ENCODE measurements at regions of chr11 and their contacts with region 1.

Region 1: DNA sequence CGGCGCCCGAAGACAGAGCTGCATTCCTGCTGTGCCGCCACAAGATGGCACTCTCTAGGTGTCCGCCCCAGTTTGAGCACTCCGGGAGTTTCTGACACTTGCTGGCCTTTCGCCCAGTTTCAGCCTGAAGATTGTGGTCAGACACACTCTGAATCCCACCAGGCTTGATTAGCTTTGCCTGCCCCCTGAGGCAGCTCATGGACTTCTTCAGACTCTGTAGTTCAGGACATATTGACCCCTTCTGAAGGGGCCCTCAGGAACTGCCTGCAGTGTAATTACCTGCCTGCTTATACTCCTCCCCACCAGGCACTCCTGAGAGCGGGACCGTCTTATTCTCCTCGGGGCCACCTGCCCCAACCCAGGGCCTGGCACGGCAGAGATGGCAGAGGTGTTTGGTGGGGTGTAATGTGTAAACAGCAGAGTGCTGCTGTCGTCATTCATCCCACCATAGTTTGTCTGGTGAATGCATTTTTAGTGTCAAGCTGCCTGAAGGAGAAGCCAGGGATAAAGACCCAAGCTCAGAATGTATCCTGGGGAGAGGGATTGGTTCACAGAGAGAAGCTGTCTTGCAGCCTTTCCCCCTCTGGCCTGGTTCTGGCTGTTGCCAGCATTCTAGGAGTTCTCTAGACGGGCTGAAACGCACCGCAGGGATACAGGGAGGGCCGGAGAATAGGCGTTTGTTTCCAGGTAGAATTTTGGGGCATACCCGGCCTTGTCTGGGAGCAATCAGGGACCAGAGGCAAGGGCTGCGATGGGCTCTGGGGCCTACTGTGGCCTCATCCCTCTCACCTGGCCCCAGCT is 46.4 kb downstream of the EIF3F start:
- DNase-seq: peak in 4 of 5 donors; percentile 42 to 48 (median 46)
- H3K4me3 ChIP-seq: no peak overlapping the region
- H3K4me3 Mint-ChIP-seq: peak overlapping the region; percentile 6 to 81 (median 54)
- H3K27ac ChIP-seq: no peak overlapping the region
- H3K27ac Mint-ChIP-seq: peak overlapping the region in 5 of 7 donors; percentile 7 to 82 (median 72)
- H3K4me1 ChIP-seq: peaks cover 9% of the 10 kb centered on the region
- H3K4me1 Mint-ChIP-seq: peaks cover 8 to 12% (median 9%) of the 10 kb centered on the region in 4 donors
- H3K27me3 ChIP-seq: no peaks in the 10 kb centered on the region
- H3K27me3 Mint-ChIP-seq: peaks cover 6 to 23% of the 10 kb centered on the region in 2 donors

Region 2: DNA sequence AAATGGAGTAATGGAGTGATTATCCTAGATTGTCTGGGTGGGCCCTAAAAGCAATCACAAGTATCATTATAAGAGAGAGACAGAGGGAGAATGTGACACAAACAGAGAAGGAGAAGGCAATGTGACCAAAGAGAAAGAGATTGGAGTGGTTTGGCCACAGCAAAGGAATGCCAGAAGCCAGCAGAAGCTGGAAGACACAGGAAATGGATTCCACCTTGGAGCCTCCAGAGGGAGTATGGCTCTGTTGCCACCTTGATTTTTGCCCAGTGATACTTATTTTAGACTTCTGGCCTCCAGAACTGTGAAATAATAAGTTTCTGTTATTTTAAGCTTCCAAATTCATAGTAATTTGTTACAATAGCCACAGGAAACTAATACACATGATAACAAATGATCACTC is 200.0 kb before region 1 on chr11:
- CTCF ChIA-PET with region 1: no interaction called
- POLR2A ChIA-PET with region 1: no interaction called
- intact Hi-C with region 1: no loop called
- DNase-seq: no peak
- H3K4me3 ChIP-seq: no peak overlapping the region
- H3K4me3 Mint-ChIP-seq: no peak overlapping the region
- H3K27ac ChIP-seq: no peak overlapping the region
- H3K27ac Mint-ChIP-seq: no peak overlapping the region
- H3K4me1 ChIP-seq: no peaks in the 10 kb centered on the region
- H3K4me1 Mint-ChIP-seq: peaks cover 0 to 2% (median 0%) of the 10 kb centered on the region in 4 donors
- H3K27me3 ChIP-seq: no peaks in the 10 kb centered on the region
- H3K27me3 Mint-ChIP-seq: peaks cover 1 to 5% of the 10 kb centered on the region in 2 donors

Region 3: GRCh38 chr11:7910286-7910788 is 123.2 kb before region 1 on chr11:
- CTCF ChIA-PET with region 1: no interaction called
- POLR2A ChIA-PET with region 1: no interaction called
- intact Hi-C with region 1: no loop called
- DNase-seq: no peak
- H3K4me3 ChIP-seq: no peak overlapping the region
- H3K4me3 Mint-ChIP-seq: no peak overlapping the region
- H3K27ac ChIP-seq: no peak overlapping the region
- H3K27ac Mint-ChIP-seq: no peak overlapping the region
- H3K4me1 ChIP-seq: no peaks in the 10 kb centered on the region
- H3K4me1 Mint-ChIP-seq: no peaks in the 10 kb centered on the region
- H3K27me3 ChIP-seq: no peaks in the 10 kb centered on the region
- H3K27me3 Mint-ChIP-seq: peaks cover 11 to 35% of the 10 kb centered on the region in 2 donors

Region 4: GRCh38 chr11:8018484-8019313 is 14.8 kb before region 1 on chr11:
- CTCF ChIA-PET with region 1: interaction called, 16 read pairs
- POLR2A ChIA-PET with region 1: no interaction called
- intact Hi-C with region 1: no loop called
- DNase-seq: peak; percentile 86 to 91 (median 89)
- H3K4me3 ChIP-seq: peak overlapping the region; percentile 23 to 74
- H3K4me3 Mint-ChIP-seq: peak overlapping the region; percentile 79 to 87 (median 84)
- H3K27ac ChIP-seq: peak overlapping the region; percentile 61
- H3K27ac Mint-ChIP-seq: peak overlapping the region; percentile 87 to 98 (median 93)
- H3K4me1 ChIP-seq: peaks cover 14% of the 10 kb centered on the region
- H3K4me1 Mint-ChIP-seq: peaks cover 10 to 20% (median 14%) of the 10 kb centered on the region in 4 donors
- H3K27me3 ChIP-seq: no peaks in the 10 kb centered on the region
- H3K27me3 Mint-ChIP-seq: peaks cover 15 to 20% of the 10 kb centered on the region in 2 donors

Region 5: GRCh38 chr11:8045839-8046238 is 12.3 kb after region 1 on chr11:
- CTCF ChIA-PET with region 1: interaction called, 16 read pairs
- POLR2A ChIA-PET with region 1: no interaction called
- intact Hi-C with region 1: no loop called
- DNase-seq: no peak
- H3K4me3 ChIP-seq: no peak overlapping the region
- H3K4me3 Mint-ChIP-seq: no peak overlapping the region
- H3K27ac ChIP-seq: no peak overlapping the region
- H3K27ac Mint-ChIP-seq: no peak overlapping the region
- H3K4me1 ChIP-seq: no peaks in the 10 kb centered on the region
- H3K4me1 Mint-ChIP-seq: no peaks in the 10 kb centered on the region
- H3K27me3 ChIP-seq: no peaks in the 10 kb centered on the region
- H3K27me3 Mint-ChIP-seq: peaks cover 2 to 5% of the 10 kb centered on the region in 2 donors

Region 6: DNA sequence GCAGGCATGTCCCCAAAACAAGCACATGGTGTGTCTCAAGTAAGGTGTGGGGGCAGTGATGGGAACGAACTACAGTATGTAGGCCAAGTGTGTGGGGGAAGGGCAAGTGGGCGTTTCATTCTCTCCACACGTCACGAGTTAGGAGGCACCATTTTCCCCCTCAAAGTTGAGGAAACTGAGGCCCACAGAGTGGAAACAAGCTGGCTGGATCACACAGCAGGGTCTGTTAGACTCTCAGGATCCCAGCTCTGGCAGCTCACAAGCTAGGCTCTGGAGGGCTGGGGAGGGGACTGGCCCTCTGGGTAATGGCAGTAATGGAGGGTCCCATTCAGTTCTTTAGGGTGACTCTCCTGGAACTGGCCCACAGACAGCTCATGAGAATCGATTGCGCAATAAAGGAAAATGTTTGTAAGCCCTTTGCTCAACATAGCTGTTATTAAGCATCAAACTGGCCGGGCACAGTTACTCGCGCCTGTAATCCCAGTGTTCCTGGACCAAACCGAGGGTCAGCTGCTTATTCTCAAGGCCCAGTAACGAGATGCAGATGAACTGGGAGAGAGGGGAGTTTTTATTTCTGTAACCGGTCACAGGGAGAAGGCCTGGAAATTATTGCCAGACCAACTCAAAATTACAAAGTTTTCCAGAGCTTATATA is 23.4 kb after region 1 on chr11:
- CTCF ChIA-PET with region 1: interaction called, 10 read pairs
- POLR2A ChIA-PET with region 1: no interaction called
- intact Hi-C with region 1: no loop called
- DNase-seq: no peak
- H3K4me3 ChIP-seq: no peak overlapping the region
- H3K4me3 Mint-ChIP-seq: no peak overlapping the region
- H3K27ac ChIP-seq: no peak overlapping the region
- H3K27ac Mint-ChIP-seq: no peak overlapping the region
- H3K4me1 ChIP-seq: no peaks in the 10 kb centered on the region
- H3K4me1 Mint-ChIP-seq: peaks cover 0 to 2% (median 0%) of the 10 kb centered on the region in 4 donors
- H3K27me3 ChIP-seq: no peaks in the 10 kb centered on the region
- H3K27me3 Mint-ChIP-seq: no peaks in the 10 kb centered on the region

Region 7: GRCh38 chr11:8087185-8087584 is 53.7 kb after region 1 on chr11:
- CTCF ChIA-PET with region 1: interaction called, 17 read pairs
- POLR2A ChIA-PET with region 1: no interaction called
- intact Hi-C with region 1: no loop called
- DNase-seq: no peak
- H3K4me3 ChIP-seq: no peak overlapping the region
- H3K4me3 Mint-ChIP-seq: no peak overlapping the region
- H3K27ac ChIP-seq: no peak overlapping the region
- H3K27ac Mint-ChIP-seq: no peak overlapping the region
- H3K4me1 ChIP-seq: no peaks in the 10 kb centered on the region
- H3K4me1 Mint-ChIP-seq: peaks cover 0 to 3% (median under 1%) of the 10 kb centered on the region in 4 donors
- H3K27me3 ChIP-seq: peaks cover 11% of the 10 kb centered on the region
- H3K27me3 Mint-ChIP-seq: peaks cover 22 to 30% of the 10 kb centered on the region in 2 donors

Region 8: DNA sequence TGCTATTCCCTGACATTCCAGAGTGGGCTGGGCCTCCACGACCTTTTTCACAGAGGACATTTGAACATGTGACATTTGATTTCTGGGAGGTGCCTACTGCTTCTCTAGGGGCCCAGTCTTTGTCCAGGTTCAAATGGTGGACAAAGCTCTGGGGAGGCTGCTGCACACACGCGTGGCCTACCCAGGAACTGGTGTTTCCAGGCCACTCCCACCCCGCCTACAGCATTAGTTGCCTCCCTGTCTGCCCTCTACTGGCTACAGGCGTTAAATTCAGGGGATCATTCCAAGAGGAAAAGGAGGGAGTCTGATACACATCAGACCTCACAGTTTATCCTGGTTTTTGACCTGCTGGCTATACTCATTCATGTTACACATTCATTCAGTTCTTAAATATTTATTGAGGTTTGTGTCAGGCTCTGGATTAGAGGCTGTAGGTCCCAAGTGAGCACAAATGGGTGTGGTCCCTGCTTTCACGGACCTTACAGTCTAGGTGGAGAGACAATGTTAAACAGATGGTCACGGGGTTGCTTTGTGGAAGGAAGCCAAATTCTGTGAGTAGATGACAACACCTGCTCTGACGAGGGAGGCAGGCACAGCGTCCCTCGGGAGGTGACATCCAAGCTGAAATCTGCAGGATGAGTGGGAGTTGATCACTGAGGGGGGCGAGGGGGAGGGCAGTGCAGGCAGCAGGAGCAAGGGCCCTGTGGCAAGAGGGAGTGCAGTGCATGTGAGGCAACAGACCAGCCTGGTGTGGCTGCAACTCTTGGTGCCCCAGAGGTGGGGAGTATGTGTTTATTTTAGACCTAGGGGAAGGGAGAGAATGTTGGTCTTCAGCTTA is 59.3 kb after region 1 on chr11:
- CTCF ChIA-PET with region 1: interaction called, 127 read pairs
- POLR2A ChIA-PET with region 1: no interaction called
- intact Hi-C with region 1: no loop called
- DNase-seq: peak in 3 of 5 donors; percentile 16 to 19 (median 16)
- H3K4me3 ChIP-seq: no peak overlapping the region
- H3K4me3 Mint-ChIP-seq: no peak overlapping the region
- H3K27ac ChIP-seq: no peak overlapping the region
- H3K27ac Mint-ChIP-seq: no peak overlapping the region
- H3K4me1 ChIP-seq: no peaks in the 10 kb centered on the region
- H3K4me1 Mint-ChIP-seq: peaks cover 0 to 5% (median 0%) of the 10 kb centered on the region in 4 donors
- H3K27me3 ChIP-seq: no peaks in the 10 kb centered on the region
- H3K27me3 Mint-ChIP-seq: no peaks in the 10 kb centered on the region

Region 9: DNA sequence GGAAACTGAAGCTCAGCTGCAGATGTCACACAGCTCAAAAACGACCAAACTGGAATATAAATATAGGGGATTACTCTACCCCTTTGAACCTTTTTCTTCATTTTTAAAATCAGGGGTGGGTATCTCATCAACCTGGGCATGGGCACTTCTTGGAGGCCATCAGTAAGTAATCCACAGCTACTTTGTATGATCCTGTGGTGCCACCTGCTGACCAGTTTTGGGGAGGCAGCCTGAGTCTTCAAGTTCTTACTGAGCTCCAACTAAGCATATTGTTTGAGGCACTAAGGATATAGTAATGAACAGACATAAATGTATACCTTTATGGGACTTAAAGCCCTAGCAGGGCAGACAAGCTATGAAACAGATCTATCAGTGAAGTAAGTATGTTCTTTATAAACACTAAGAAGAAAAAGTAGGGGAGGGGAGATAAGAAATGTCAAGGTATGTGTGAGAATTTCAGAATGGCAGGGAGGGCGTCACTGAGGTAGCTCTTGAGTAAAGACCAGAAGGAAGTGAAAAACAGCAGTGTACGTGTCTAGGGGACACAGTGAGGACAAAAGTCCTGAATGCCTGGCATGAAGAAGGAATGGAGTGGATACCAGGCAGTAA is 65.9 kb after region 1 on chr11:
- CTCF ChIA-PET with region 1: interaction called, 127 read pairs
- POLR2A ChIA-PET with region 1: no interaction called
- intact Hi-C with region 1: loop called (anchors 1 kb)
- DNase-seq: peak; percentile 56 to 68 (median 58)
- H3K4me3 ChIP-seq: no peak overlapping the region
- H3K4me3 Mint-ChIP-seq: no peak overlapping the region
- H3K27ac ChIP-seq: no peak overlapping the region
- H3K27ac Mint-ChIP-seq: peak overlapping the region in 1 of 7 donors; percentile 1
- H3K4me1 ChIP-seq: no peaks in the 10 kb centered on the region
- H3K4me1 Mint-ChIP-seq: no peaks in the 10 kb centered on the region
- H3K27me3 ChIP-seq: no peaks in the 10 kb centered on the region
- H3K27me3 Mint-ChIP-seq: no peaks in the 10 kb centered on the region